ENCODE measurements at regions of chr6 and their contacts with region 1.

Region 1: DNA sequence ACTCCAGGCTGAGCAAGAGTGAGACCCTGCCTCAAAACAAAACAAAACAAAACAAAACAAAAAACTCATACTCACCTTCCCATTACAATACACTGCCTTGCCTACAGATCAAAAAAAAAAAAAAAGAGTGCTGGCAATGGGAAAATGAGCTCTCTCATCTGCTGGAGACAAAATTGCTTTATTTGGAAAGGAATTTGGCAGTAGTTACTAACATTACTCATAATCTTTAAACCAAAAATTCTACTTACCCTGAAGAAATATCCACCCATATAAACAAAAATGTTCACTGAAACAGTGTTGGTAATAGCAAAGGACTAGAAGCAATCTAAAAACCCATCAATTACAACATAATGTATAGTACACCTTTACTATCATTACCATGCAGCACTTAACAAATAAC is 120.4 kb downstream of the RNGTT start:
- DNase-seq: no peak
- H3K4me3 ChIP-seq: no peak overlapping the region
- H3K27ac ChIP-seq: peak overlapping the region in 1 of 2 donors; percentile 7
- H3K4me1 ChIP-seq: peaks cover 5% of the 10 kb centered on the region
- H3K27me3 ChIP-seq: no peaks in the 10 kb centered on the region
- CTCF ChIP-seq: no peak
- EP300 ChIP-seq: no peak
- POLR2A ChIP-seq: no peak

Region 2: DNA sequence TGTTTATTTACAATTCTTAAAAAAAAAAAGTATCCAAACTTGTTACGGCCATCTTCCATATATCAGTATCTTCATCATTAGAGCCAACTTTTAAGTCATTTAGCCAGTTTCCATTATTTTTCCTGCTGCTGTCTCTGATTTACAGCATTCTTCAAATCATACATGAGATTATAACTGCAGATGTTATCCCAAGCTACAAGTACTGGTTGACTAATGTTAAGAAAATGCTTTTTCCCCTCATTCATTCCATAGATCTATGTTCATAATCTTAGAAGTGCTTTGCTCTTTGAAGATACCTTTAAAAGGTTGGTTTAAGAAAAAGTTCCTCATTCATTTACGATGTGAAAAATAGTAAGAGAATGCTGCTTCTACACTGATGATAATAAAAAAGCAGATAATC is 38.3 kb before region 1 on chr6:
- intact Hi-C with region 1: no loop called
- DNase-seq: no peak
- H3K4me3 ChIP-seq: no peak overlapping the region
- H3K27ac ChIP-seq: no peak overlapping the region
- H3K4me1 ChIP-seq: peaks cover 1% of the 10 kb centered on the region
- H3K27me3 ChIP-seq: no peaks in the 10 kb centered on the region
- CTCF ChIP-seq: no peak
- EP300 ChIP-seq: no peak
- POLR2A ChIP-seq: no peak

Region 3: GRCh38 chr6:88815491-88815890 is 27.5 kb before region 1 on chr6:
- intact Hi-C with region 1: loop called in 1 of 4 experiments (anchors 2 kb)
- DNase-seq: no peak
- H3K4me3 ChIP-seq: no peak overlapping the region
- H3K27ac ChIP-seq: no peak overlapping the region
- H3K4me1 ChIP-seq: no peaks in the 10 kb centered on the region
- H3K27me3 ChIP-seq: no peaks in the 10 kb centered on the region
- CTCF ChIP-seq: no peak
- EP300 ChIP-seq: no peak
- POLR2A ChIP-seq: no peak